Ascending aorta (tissue), 2 donors: ENCODE measurements at regions of chr1 and their contacts with region 1.

Region 1: GRCh38 chr1:31564134-31564989 is 12.0 kb upstream of the TINAGL1 start:
- DNase-seq: peak in 1 of 2 donors; percentile 81
- H3K4me3 ChIP-seq: no peak overlapping the region
- H3K27ac ChIP-seq: peak overlapping the region; percentile 2 to 58
- H3K4me1 ChIP-seq: peaks cover 0 to 32% of the 10 kb centered on the region in 2 donors
- H3K27me3 ChIP-seq: no peaks in the 10 kb centered on the region
- CTCF ChIP-seq: peak; percentile 79 to 92 (median 90)

Region 2: GRCh38 chr1:31434171-31434871 is 130.0 kb before region 1 on chr1:
- intact Hi-C with region 1: no loop called
- DNase-seq: peak in 1 of 2 donors; percentile 30
- H3K4me3 ChIP-seq: no peak overlapping the region
- H3K27ac ChIP-seq: no peak overlapping the region
- H3K4me1 ChIP-seq: no peaks in the 10 kb centered on the region
- H3K27me3 ChIP-seq: no peaks in the 10 kb centered on the region
- CTCF ChIP-seq: no peak

Region 3: GRCh38 chr1:31467005-31467700 is 97.2 kb before region 1 on chr1:
- intact Hi-C with region 1: no loop called
- DNase-seq: no peak
- H3K4me3 ChIP-seq: no peak overlapping the region
- H3K27ac ChIP-seq: no peak overlapping the region
- H3K4me1 ChIP-seq: no peaks in the 10 kb centered on the region
- H3K27me3 ChIP-seq: no peaks in the 10 kb centered on the region
- CTCF ChIP-seq: no peak

Region 4: GRCh38 chr1:31617917-31618660 is 53.7 kb after region 1 on chr1:
- intact Hi-C with region 1: loop called (anchors 2 kb)
- DNase-seq: no peak
- H3K4me3 ChIP-seq: peak overlapping the region; percentile 47 to 73
- H3K27ac ChIP-seq: no peak overlapping the region
- H3K4me1 ChIP-seq: peaks cover 4 to 28% of the 10 kb centered on the region in 2 donors
- H3K27me3 ChIP-seq: no peaks in the 10 kb centered on the region
- CTCF ChIP-seq: peak; percentile 83 to 92 (median 92)